ENCODE measurements at regions of chr1 and their contacts with region 1.

Region 1: GRCh38 chr1:162854245-162854882 is 6.6 kb downstream of the CCDC190 start:
- DNase-seq: peak; percentile 79
- H3K4me3 ChIP-seq: no peak overlapping the region
- CTCF ChIP-seq: peak; percentile 80

Region 2: GRCh38 chr1:162905174-162906158 is 51.1 kb after region 1 on chr1:
- in situ Hi-C with region 1: no loop called
- DNase-seq: peak; percentile 46
- H3K4me3 ChIP-seq: no peak overlapping the region
- CTCF ChIP-seq: no peak

Region 3: DNA sequence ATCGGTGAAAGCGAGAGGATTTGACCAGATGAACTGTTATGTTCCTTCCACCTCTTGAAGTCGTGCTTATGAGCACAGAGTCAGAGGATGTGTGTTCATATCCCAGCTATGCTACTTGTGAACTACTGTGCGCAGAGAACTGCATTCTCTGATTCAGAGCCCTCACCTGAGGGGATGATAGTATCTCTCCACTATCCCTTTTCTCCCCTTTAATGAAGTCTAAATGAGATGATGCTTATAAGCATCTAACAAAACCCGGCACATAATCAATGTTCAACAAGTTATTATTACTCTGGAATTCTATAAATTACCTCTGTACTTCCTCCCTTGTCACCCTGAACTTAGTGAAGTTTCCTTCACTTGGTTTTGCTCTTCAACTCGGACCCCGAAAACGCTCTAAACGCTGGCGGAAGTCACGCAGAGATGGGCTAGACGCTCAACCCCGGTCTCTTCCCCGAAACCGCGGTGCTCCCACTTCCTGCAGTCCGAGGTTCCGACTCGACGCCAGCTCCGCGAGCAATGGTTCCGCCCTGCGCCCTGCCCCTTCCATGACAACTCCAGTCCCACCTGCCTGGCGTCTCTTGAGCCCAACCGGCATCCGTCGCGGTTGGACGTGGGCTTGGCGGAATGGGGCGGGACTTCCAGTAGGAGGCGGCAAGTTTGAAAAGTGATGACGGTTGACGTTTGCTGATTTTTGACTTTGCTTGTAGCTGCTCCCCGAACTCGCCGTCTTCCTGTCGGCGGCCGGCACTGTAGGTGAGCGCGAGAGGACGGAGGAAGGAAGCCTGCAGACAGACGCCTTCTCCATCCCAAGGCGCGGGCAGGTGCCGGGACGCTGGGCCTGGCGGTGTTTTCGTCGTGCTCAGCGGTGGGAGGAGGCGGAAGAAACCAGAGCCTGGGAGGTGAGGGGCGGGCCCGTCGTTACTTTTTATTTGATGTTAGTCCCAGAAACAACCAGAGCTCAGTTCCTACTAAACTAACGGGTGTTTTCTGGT is 467.2 kb after region 1 on chr1 and contains the start of gene NUF2:
- in situ Hi-C with region 1: loop called (anchors 25 kb)
- DNase-seq: peak; percentile 99
- H3K4me3 ChIP-seq: peak within 1 kb of the TSS; percentile 63
- CTCF ChIP-seq: no peak